ENCODE measurements at regions of chr2 and their contacts with region 1.

Region 1: DNA sequence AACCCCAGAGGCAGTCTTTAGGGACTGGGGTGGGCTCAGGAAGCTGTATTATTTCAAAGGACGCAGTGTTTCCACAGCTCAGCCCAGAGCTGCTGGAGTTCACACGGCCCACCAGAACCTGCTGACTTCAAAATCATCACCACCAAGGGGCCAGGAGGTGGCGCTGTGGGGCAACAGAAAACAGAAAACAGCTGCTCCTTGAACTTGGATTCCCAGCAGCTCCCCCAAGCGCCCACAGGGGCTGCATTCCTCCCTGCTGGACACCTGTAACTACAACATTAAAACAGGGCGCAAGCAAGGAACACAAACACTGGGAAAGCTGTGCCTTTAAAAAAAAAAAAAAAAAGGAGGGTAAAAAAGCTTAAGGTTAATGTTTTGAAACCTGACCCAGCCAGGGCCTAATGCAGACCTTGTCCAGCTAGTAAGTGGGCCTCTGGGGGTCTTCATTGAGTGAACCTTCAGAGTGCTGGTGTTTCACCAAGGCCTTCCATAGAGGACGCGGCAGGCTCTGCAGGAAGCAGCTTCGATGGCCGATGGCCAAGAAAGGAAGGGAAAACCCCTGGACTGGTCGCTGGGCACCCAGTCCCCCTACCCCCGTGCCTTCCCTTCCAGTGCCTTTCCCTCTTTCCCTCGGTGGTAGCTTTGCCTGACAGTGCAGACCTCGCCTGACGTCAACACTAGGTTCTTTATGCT is 25.9 kb downstream of the MLPH start:
- DNase-seq: peak; percentile 82 to 89
- H3K4me3 ChIP-seq: no peak overlapping the region
- H3K27ac ChIP-seq: no peak overlapping the region
- H3K4me1 ChIP-seq: peaks cover 0 to 3% (median 1%) of the 10 kb centered on the region in 4 experiments; a peak in 3 of 7 replicates
- H3K27me3 ChIP-seq: no peaks in the 10 kb centered on the region
- CTCF ChIP-seq: peak; percentile 84 to 99 (median 90)
- EP300 ChIP-seq: peak in 1 of 2 experiments; percentile 19; a peak in 1 of 3 replicates
- POLR2A ChIP-seq: no peak
- RAD21 ChIP-seq: peak; percentile 94 to 97

Region 2: DNA sequence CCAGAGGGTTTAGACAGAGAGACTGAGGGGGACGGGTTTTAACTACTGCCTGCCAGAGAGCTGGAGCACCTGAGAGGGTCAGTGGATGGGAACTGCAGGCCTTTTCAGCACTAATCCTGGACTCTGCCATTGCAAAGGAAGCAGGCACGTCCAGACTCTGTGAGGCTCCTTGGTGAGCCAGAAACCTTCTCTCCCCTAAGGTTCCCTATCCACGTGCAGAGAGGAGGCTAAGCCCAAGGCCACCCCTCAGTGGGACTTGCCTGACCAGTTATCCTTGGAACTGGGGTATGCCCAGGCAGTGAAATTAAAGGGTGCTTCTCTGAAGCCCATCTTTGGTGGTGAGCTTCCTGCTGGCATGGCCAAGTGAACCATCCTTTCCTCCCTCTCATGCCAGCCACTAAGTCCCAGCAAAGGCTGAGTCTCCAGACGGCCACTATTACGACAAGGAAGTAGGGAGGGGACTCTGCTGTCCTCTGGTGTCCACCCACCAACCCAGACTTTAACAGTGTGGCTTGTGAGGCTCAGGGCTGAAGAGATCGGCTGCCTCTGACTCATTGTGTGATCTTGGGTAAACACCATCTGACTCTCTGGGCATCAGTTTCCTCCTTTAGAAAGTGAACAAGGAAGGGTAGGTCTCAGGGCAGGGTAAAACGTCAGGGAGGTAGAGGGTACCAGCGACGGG is 29.7 kb before region 1 on chr2:
- CTCF ChIA-PET with region 1: interaction called, 20 read pairs
- POLR2A ChIA-PET with region 1: interaction called, 4 read pairs
- DNase-seq: no peak
- H3K4me3 ChIP-seq: no peak overlapping the region
- H3K27ac ChIP-seq: no peak overlapping the region
- H3K4me1 ChIP-seq: peaks cover 0 to 14% (median 8%) of the 10 kb centered on the region in 4 experiments; a peak in 6 of 7 replicates
- H3K27me3 ChIP-seq: peaks cover 6 to 33% (median 24%) of the 10 kb centered on the region in 4 experiments; a peak in 6 of 7 replicates
- CTCF ChIP-seq: no peak
- EP300 ChIP-seq: no peak
- POLR2A ChIP-seq: no peak
- RAD21 ChIP-seq: no peak

Region 3: GRCh38 chr2:237524631-237525030 is 11.7 kb after region 1 on chr2:
- CTCF ChIA-PET with region 1: interaction called, 16 read pairs
- POLR2A ChIA-PET with region 1: interaction called, 4 read pairs
- DNase-seq: no peak
- H3K4me3 ChIP-seq: no peak overlapping the region
- H3K27ac ChIP-seq: no peak overlapping the region
- H3K4me1 ChIP-seq: no peaks in the 10 kb centered on the region
- H3K27me3 ChIP-seq: no peaks in the 10 kb centered on the region
- CTCF ChIP-seq: no peak
- EP300 ChIP-seq: no peak
- POLR2A ChIP-seq: no peak
- RAD21 ChIP-seq: no peak

Region 4: GRCh38 chr2:237558906-237559641 is 46.2 kb after region 1 on chr2:
- CTCF ChIA-PET with region 1: interaction called, 25 read pairs
- POLR2A ChIA-PET with region 1: no interaction called
- DNase-seq: no peak
- H3K4me3 ChIP-seq: no peak overlapping the region
- H3K27ac ChIP-seq: no peak overlapping the region
- H3K4me1 ChIP-seq: no peaks in the 10 kb centered on the region
- H3K27me3 ChIP-seq: no peaks in the 10 kb centered on the region; a peak in 1 of 7 replicates
- CTCF ChIP-seq: no peak
- EP300 ChIP-seq: no peak
- POLR2A ChIP-seq: no peak
- RAD21 ChIP-seq: no peak

Region 5: DNA sequence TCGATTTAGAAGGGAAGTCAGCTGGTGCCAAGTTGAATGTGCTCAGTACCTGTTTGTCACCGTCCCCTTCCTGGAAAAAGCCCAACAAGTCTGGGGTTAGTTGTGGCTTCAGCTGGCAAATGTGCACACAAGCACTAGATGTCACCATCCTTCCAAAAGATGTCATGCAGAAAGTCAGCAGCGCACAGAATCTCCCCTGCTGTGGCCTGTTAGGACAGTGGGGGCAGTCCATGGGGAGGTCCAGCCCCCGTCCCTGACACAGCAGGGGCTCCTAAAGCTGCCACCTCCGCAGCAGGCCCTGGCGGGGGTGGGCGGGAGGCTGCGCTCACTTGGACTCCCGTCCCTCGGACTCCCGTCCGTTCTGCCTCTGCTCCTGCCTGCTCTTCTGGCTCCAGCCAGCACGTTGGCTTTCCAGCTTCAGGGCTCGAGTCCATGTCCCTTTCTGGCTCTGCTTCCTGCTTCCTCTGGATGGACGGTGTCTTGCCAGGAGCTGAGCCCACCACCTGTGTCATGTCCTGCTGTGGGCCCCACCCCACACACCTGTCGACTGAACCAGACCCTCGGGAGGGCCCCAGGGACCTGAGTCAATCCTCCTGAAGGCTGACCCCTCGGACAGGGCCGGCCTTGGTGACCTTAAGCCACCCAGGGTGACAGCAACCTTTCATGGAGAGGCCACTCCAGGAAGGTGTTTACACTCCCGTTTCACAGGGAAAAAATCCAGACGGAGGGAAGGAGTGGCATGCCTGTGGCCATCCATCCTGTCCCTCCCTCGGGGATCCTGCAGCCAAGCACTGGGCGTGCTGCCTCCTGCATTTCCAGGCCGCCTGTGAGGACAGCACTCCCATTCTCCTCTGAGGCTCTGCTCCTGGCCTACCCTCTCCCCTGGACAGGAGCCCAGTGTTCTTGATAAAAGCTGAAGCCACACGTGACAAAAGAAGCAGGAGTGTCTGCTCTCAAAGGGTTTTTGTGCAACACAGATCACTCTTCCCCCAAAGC is 69.1 kb after region 1 on chr2:
- CTCF ChIA-PET with region 1: interaction called, 107 read pairs
- POLR2A ChIA-PET with region 1: no interaction called
- DNase-seq: no peak
- H3K4me3 ChIP-seq: no peak overlapping the region
- H3K27ac ChIP-seq: no peak overlapping the region
- H3K4me1 ChIP-seq: peaks cover 0 to 19% (median 14%) of the 10 kb centered on the region in 4 experiments; a peak in 6 of 7 replicates
- H3K27me3 ChIP-seq: no peaks in the 10 kb centered on the region
- CTCF ChIP-seq: peak in 2 of 3 experiments; percentile 30 to 51; a peak in 2 of 4 replicates
- EP300 ChIP-seq: no peak
- POLR2A ChIP-seq: no peak
- RAD21 ChIP-seq: peak; percentile 54 to 69

Region 6: DNA sequence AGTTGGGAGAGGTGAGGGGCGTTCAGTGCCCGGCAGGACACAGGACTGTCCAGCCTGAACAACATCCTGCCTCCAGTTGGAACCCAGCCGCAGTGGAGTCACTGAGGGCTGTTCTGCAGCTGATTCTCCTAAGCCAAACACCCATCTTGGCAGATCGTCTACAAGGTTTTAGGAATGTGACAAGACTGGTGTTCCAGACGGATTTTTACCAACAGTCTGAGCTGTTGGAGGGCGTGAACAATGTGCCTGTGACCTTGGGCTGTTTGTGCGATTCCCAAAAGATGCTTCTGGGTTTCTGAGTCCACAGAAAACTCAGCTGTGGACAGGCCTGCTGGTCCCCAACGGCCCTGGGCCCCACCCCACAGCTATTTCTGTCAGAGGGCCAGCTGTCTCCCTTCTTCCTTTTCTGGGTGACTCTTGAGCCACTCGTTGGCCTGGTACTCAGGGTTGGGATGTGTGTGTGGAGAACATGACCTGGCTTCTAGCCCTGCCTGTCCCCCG is 120.2 kb after region 1 on chr2:
- CTCF ChIA-PET with region 1: no interaction called
- POLR2A ChIA-PET with region 1: no interaction called
- DNase-seq: no peak
- H3K4me3 ChIP-seq: no peak overlapping the region
- H3K27ac ChIP-seq: no peak overlapping the region
- H3K4me1 ChIP-seq: peaks cover 3 to 6% (median 5%) of the 10 kb centered on the region in 4 experiments; a peak in 5 of 7 replicates
- H3K27me3 ChIP-seq: peaks cover 0 to 6% (median 5%) of the 10 kb centered on the region in 4 experiments; a peak in 6 of 7 replicates
- CTCF ChIP-seq: no peak
- EP300 ChIP-seq: no peak
- POLR2A ChIP-seq: no peak
- RAD21 ChIP-seq: no peak